ENCODE measurements at regions of chr5 and their contacts with region 1.

Region 1: GRCh38 chr5:59401637-59402036 is 491.9 kb downstream of the PDE4D start:
- DNase-seq: no peak
- ATAC-seq: no peak
- H3K4me3 ChIP-seq: no peak overlapping the region
- H3K27ac ChIP-seq: no peak overlapping the region
- H3K4me1 ChIP-seq: no peaks in the 10 kb centered on the region
- H3K27me3 ChIP-seq: no peaks in the 10 kb centered on the region
- CTCF ChIP-seq: no peak

Region 2: DNA sequence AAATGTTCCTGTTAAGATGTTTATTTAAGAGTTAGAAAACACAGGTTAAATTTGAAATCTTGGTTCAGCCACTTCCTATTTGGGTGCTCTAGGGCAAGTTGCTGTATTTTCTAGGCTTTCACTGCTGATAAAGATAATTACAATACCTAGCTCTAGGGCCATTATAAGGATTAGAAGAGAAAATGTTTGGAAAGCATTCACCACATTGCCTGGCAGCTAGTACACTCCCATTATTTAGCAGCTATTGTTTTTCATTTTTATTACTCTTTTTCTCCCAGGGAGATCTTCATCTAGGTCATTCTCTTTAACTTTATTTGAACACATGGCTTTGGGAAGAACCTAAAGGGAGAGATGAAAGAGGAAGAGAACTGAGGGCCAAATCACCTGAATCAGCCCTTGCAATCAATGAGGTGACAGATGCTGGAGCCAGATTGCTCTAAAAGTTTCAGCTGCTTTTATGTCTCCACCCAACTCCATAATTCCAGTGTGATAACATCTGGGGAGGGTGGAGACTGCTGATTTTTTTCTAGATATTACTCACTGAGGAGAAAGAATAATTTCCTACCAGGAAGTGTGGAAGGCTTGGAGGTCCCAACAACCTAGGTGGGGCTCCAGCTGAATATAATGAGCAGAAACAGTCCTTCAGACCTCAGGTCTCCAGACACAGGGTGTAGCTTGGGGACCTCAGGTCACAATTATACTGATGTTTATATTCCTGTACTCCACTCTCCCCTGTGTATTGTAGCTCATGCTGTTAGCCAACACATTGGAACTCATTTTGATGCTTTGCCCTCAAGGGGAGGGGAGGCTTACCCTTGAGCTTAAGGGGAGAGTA is 178.7 kb before region 1 on chr5:
- intact Hi-C with region 1: no loop called
- DNase-seq: no peak
- ATAC-seq: no peak
- H3K4me3 ChIP-seq: no peak overlapping the region
- H3K27ac ChIP-seq: no peak overlapping the region
- H3K4me1 ChIP-seq: peaks cover 4 to 7% (median 6%) of the 10 kb centered on the region in 3 donors
- H3K27me3 ChIP-seq: no peaks in the 10 kb centered on the region
- CTCF ChIP-seq: no peak

Region 3: GRCh38 chr5:59483971-59484472 is 82.4 kb after region 1 on chr5:
- intact Hi-C with region 1: loop called in 1 of 3 experiments (anchors 10 kb)
- DNase-seq: no peak
- ATAC-seq: peak in 1 of 4 donors; percentile 38
- H3K4me3 ChIP-seq: no peak overlapping the region
- H3K27ac ChIP-seq: no peak overlapping the region
- H3K4me1 ChIP-seq: peaks cover 4 to 33% (median 29%) of the 10 kb centered on the region in 3 donors
- H3K27me3 ChIP-seq: no peaks in the 10 kb centered on the region
- CTCF ChIP-seq: no peak

Region 4: DNA sequence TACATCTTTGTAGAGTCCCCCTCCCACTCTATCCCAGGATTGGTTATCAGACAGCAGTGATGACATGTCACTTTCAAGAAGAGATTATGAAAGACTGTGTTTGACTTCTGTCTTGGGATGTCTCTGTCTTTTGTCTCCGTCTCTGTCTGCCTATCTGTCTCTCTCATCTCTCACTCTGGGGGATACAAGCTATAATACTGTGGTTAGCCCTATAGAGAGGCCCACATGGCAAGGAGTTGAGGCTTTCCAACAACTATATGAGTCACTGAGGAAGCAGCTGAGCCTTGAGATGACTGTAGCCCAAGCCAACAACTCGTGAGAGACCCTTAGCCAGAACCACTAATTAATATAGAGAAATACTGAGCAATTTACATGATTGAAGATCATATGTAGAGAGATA is 207.1 kb after region 1 on chr5:
- intact Hi-C with region 1: no loop called
- DNase-seq: no peak
- ATAC-seq: no peak
- H3K4me3 ChIP-seq: no peak overlapping the region
- H3K27ac ChIP-seq: no peak overlapping the region
- H3K4me1 ChIP-seq: peaks cover 0 to 6% (median 3%) of the 10 kb centered on the region in 3 donors
- H3K27me3 ChIP-seq: no peaks in the 10 kb centered on the region
- CTCF ChIP-seq: no peak